ENCODE measurements at regions of chr7 and their contacts with region 1.

Region 1: GRCh38 chr7:2477447-2478398 is 1.5 kb upstream of the GRIFIN start:
- DNase-seq: peak; percentile 49
- ATAC-seq: peak; percentile 99
- H3K4me3 ChIP-seq: no peak overlapping the region
- H3K27ac ChIP-seq: no peak overlapping the region
- H3K4me1 ChIP-seq: no peaks in the 10 kb centered on the region
- H3K27me3 ChIP-seq: peaks cover 13% of the 10 kb centered on the region; the same call in 1 of the 2 replicates
- CTCF ChIP-seq: peak; percentile 85
- POLR2A ChIP-seq: no peak
- RAD21 ChIP-seq: peak; percentile 89

Region 2: DNA sequence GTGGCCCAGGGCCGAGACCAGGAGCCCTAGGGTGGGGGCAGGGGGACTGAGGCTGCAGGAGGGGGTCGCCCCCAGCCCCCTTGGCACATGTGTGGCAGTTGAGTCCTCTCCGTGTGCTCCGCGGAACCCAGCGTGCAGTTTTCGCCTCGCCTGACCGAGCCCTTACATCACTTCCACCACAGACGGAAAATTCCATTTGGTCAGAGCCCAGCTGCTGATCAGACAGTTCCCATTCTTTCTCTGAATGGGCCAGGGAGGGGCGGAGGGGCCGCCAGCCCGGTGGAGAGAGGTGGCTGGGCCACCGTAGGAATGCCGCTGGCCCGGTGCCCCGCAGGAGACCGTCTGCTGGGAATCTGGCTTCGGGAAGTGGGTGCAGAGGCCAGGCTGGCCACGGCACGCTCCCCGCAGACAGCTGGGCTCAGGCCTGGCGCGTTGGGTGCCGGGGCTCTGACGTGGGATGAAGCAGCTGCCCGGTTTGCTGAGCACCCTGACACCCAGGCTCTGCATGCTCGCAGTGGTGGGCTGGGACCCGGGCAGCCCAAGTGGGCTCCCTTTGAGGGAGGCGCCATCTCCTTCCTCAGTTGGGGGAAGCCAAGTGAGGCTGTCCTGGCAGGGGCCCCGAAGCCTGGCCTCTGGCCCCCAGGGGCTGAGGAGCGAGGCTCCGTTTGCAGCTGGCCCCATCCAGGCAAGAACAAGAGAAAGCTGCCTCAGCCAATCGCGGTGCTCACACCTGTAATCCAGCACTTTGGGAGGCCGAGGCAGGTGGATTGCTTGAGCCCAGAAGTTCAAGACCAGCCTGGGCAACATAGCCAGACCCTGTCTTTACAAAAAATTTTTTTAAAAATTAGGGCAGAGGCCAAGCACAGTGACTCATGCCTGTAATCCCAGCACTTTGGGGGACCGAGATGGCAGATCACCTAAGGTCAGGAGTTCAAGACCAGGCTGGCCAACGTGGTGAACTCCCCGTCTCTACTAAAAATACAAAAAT is 164.0 kb after region 1 on chr7:
- CTCF ChIA-PET with region 1: no interaction called
- POLR2A ChIA-PET with region 1: no interaction called
- dilution Hi-C with region 1: no loop called
- in situ Hi-C with region 1: no loop called
- intact Hi-C with region 1: loop called (anchors 10 kb)
- DNase-seq: peak; percentile 97
- ATAC-seq: peak; percentile 72
- H3K4me3 ChIP-seq: no peak overlapping the region
- H3K27ac ChIP-seq: peak overlapping the region; percentile 80
- H3K4me1 ChIP-seq: peaks cover 56% of the 10 kb centered on the region
- H3K27me3 ChIP-seq: no peaks in the 10 kb centered on the region
- CTCF ChIP-seq: no peak
- POLR2A ChIP-seq: peak; percentile 51
- RAD21 ChIP-seq: no peak